Mucosa of descending colon (tissue), 3 donors: ENCODE measurements at regions of chr2 and their contacts with region 1.

Region 1: DNA sequence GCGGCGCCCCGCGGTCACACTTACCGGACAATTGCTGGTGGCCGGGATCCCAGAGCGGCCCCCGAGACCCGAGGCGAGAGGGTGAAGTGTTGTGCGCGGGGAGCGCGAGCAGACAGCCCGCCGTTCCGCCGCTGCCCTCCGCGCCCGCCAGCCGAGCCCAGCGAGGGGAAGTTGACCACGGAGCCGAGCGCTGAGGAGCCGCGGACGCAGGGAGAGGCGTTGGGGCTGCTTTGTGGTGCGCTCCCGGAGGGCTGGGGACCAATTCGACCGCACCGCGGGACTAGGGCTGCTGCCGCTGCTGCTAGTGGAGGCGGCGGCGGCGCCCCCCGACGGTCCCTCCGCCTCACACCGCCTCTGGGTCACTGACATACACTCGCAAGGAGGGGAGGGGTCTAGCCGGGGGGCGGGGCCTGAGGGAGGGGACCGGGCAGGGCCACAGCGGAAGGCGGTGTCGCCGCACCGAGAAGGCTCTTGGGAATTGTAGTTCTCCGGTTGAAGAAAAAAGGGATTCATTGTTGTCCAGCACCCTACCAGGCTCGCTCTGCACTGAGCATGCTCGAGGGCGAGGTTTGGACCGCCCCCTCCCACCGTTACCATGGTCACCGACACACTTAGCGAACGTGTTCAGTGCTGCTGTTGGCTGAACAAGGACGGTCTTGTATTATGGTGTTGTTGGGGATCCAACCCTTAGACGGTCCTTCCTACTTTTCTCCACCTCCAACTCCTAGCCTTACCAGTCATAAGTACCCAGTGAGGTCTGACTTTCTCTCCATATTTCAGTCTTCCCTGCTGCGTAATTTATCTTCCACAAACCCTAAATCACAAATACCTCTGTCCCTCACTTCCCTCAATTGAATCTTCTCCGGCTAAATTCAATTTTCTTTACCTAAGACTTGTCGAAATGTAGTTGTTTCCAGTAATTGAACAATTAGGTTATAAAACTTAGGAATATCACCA is at the start of gene PELI1:
- DNase-seq: peak; percentile 98 to 99 (median 98)
- ATAC-seq: peak; percentile 97
- H3K4me3 ChIP-seq: peak within 1 kb of the TSS; percentile 87
- H3K4me1 ChIP-seq: peaks cover 16% of the 10 kb centered on the region
- CTCF ChIP-seq: no peak
- total RNA-seq, gene PELI1: 45.6 to 51.2 (median 48.9) TPM

Region 2: DNA sequence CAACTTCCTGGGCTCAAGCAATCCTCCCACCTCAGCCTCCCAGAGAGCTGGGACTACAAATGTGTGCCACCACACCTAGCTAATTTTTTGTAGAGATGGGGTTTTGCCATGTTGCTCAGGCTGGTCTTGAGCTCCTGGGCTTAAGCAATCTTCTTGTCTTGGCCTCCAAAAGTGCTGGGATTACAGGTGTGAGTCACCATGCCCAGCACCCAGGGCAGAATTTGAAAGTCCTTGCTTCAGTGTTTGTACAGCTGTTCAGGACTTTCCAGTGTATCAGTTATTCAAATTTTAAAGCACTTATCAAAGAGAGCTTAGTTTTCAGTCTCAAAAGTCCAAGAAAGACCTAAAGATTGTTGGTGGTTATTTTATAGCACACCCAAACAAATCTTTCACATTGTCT is 81.5 kb before region 1 on chr2:
- intact Hi-C with region 1: loop called in 1 of 2 experiments (anchors 10 kb)
- DNase-seq: no peak
- ATAC-seq: peak; percentile 73
- H3K4me3 ChIP-seq: no peak overlapping the region
- H3K4me1 ChIP-seq: peaks cover 9% of the 10 kb centered on the region
- CTCF ChIP-seq: no peak

Region 3: DNA sequence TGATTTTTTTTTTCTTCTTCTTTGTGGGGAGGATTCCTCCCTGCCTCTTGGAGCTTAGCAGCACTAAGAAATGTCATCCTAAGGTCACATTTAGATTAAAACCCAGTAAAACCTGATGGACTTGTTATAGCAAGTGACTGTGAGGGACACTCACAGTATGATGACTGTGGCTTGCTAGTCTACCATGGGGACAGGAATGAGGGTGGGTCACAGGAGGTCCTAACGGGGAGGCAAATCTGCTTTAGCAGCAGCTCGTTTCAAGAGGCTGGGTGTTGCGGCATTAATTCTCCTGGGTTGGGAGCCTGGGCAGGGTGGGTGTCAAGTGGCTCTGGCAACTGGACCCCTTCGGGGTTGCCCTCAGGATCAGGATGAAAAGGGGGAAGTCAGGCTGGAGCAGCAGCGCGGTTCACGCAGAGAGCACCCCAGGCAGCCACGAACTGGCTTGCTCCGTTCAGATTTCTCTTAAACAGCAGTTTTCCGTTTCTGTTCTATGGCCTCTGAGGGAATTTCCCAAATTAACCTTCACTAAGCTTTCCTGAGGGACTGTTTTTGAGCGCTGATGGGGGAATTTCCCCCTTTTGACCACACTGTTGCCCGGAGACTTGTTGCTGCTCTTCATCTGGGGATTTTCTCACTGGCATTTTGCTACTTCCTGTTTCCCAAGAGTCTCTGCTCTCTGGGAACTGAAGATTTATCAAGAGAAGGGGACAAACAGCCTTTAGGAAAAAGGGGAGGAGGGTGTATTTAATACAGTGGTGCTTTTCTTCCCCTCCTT is 59.7 kb after region 1 on chr2:
- intact Hi-C with region 1: loop called in 1 of 2 experiments (anchors 5 kb)
- DNase-seq: peak in 2 of 3 donors; percentile 49 to 60
- ATAC-seq: peak; percentile 43
- H3K4me3 ChIP-seq: no peak overlapping the region
- H3K4me1 ChIP-seq: peaks cover 14% of the 10 kb centered on the region
- CTCF ChIP-seq: no peak